Activated CD4-positive, alpha-beta memory T cell treated with anti-CD3 and anti-CD28 coated beads, Interleukin-2, amount 10 ng/mL, durations not matched to agents 7 days and 5 days (primary cell): ENCODE measurements at regions of chr5 and their contacts with region 1.

Region 1: GRCh38 chr5:87400305-87400899 is 12.3 kb downstream of the CCNH start:
- DNase-seq: no peak
- H3K4me3 Mint-ChIP-seq: no peak overlapping the region
- H3K27ac Mint-ChIP-seq: no peak overlapping the region
- H3K4me1 Mint-ChIP-seq: peaks cover 28% of the 10 kb centered on the region
- H3K27me3 Mint-ChIP-seq: no peaks in the 10 kb centered on the region

Region 2: GRCh38 chr5:86986837-86987236 is 413.6 kb before region 1 on chr5:
- CTCF ChIA-PET with region 1: interaction called, 10 read pairs
- POLR2A ChIA-PET with region 1: no interaction called
- DNase-seq: no peak
- H3K4me3 Mint-ChIP-seq: no peak overlapping the region
- H3K27ac Mint-ChIP-seq: no peak overlapping the region
- H3K4me1 Mint-ChIP-seq: no peaks in the 10 kb centered on the region
- H3K27me3 Mint-ChIP-seq: peaks cover 9% of the 10 kb centered on the region

Region 3: GRCh38 chr5:87412630-87413342 is 12.4 kb after region 1 on chr5 and contains the start of gene CCNH:
- CTCF ChIA-PET with region 1: interaction called, 13 read pairs
- POLR2A ChIA-PET with region 1: interaction called, 12 read pairs
- DNase-seq: peak; percentile 97
- H3K4me3 Mint-ChIP-seq: peak within 1 kb of the TSS; percentile 99
- H3K27ac Mint-ChIP-seq: peak within 1 kb of the TSS; percentile 91
- H3K4me1 Mint-ChIP-seq: peaks cover 40% of the 10 kb centered on the region
- H3K27me3 Mint-ChIP-seq: no peaks in the 10 kb centered on the region
- total RNA-seq, gene CCNH: 55.7 to 60.4 TPM